ENCODE measurements at regions of chr3 and their contacts with region 1.

Region 1: DNA sequence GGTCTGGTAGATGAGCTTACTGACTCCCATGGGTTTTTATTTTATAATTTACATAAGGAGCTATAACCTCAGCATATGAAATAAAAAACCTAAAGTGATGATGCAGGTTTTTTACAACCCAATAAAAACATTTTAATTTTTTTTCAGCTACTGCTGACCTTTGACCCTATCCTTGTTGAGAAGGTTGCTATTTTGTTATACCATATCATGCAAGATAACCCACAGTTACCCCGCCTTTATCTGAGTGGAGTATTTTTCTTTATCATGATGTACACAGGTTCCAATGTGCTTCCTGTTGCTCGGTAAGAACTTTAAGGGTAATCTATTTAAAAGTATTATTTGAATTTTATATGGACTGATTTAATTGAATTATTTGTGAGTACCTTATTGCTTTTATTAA is 70.8 kb downstream of the DNAJC13 start:
- DNase-seq: no peak
- H3K4me3 Mint-ChIP-seq: no peak overlapping the region
- H3K27ac Mint-ChIP-seq: no peak overlapping the region
- H3K4me1 Mint-ChIP-seq: no peaks in the 10 kb centered on the region
- H3K27me3 Mint-ChIP-seq: no peaks in the 10 kb centered on the region

Region 2: GRCh38 chr3:132503559-132503958 is 15.4 kb after region 1 on chr3:
- intact Hi-C with region 1: loop called (anchors 2 kb)
- DNase-seq: no peak
- H3K4me3 Mint-ChIP-seq: no peak overlapping the region
- H3K27ac Mint-ChIP-seq: no peak overlapping the region
- H3K4me1 Mint-ChIP-seq: no peaks in the 10 kb centered on the region
- H3K27me3 Mint-ChIP-seq: no peaks in the 10 kb centered on the region